CD4-positive, alpha-beta memory T cell (primary cell): ENCODE measurements at regions of chr11 and their contacts with region 1.

Region 1: GRCh38 chr11:57456960-57457642 is 3.2 kb upstream of the RTN4RL2 start:
- DNase-seq: peak; percentile 59 to 72 (median 62)
- H3K4me3 ChIP-seq: peak overlapping the region in 1 of 2 donors; percentile 3
- H3K4me3 Mint-ChIP-seq: peak overlapping the region; percentile 60 to 93 (median 70)
- H3K27ac ChIP-seq: no peak overlapping the region
- H3K27ac Mint-ChIP-seq: peak overlapping the region in 5 of 7 donors; percentile 32 to 83 (median 73)
- H3K4me1 ChIP-seq: peaks cover 40% of the 10 kb centered on the region
- H3K4me1 Mint-ChIP-seq: peaks cover 16 to 31% (median 24%) of the 10 kb centered on the region in 4 donors
- H3K27me3 ChIP-seq: peaks cover 17% of the 10 kb centered on the region
- H3K27me3 Mint-ChIP-seq: peaks cover 20 to 28% of the 10 kb centered on the region in 2 donors

Region 2: GRCh38 chr11:57345555-57346211 is 111.4 kb before region 1 on chr11:
- CTCF ChIA-PET with region 1: interaction called, 24 read pairs
- POLR2A ChIA-PET with region 1: interaction called, 3 read pairs
- intact Hi-C with region 1: loop called (anchors 1 kb)
- DNase-seq: peak; percentile 59 to 74 (median 63)
- H3K4me3 ChIP-seq: no peak overlapping the region
- H3K4me3 Mint-ChIP-seq: no peak overlapping the region
- H3K27ac ChIP-seq: no peak overlapping the region
- H3K27ac Mint-ChIP-seq: no peak overlapping the region
- H3K4me1 ChIP-seq: peaks cover 4% of the 10 kb centered on the region
- H3K4me1 Mint-ChIP-seq: peaks cover 0 to 5% (median 3%) of the 10 kb centered on the region in 4 donors
- H3K27me3 ChIP-seq: no peaks in the 10 kb centered on the region
- H3K27me3 Mint-ChIP-seq: peaks cover 2% of the 10 kb centered on the region in 2 donors

Region 3: GRCh38 chr11:57440744-57441414 is 16.2 kb before region 1 on chr11:
- CTCF ChIA-PET with region 1: interaction called, 22 read pairs
- POLR2A ChIA-PET with region 1: interaction called, 3 read pairs
- intact Hi-C with region 1: no loop called
- DNase-seq: no peak
- H3K4me3 ChIP-seq: no peak overlapping the region
- H3K4me3 Mint-ChIP-seq: no peak overlapping the region
- H3K27ac ChIP-seq: no peak overlapping the region
- H3K27ac Mint-ChIP-seq: no peak overlapping the region
- H3K4me1 ChIP-seq: no peaks in the 10 kb centered on the region
- H3K4me1 Mint-ChIP-seq: no peaks in the 10 kb centered on the region
- H3K27me3 ChIP-seq: no peaks in the 10 kb centered on the region
- H3K27me3 Mint-ChIP-seq: peaks cover 0 to 2% of the 10 kb centered on the region in 2 donors

Region 4: GRCh38 chr11:57480409-57481137 is 23.5 kb after region 1 on chr11:
- CTCF ChIA-PET with region 1: interaction called, 169 read pairs
- POLR2A ChIA-PET with region 1: interaction called, 5 read pairs
- intact Hi-C with region 1: loop called (anchors 1 kb)
- DNase-seq: peak; percentile 40 to 58 (median 41)
- H3K4me3 ChIP-seq: no peak overlapping the region
- H3K4me3 Mint-ChIP-seq: peak overlapping the region in 1 of 8 donors; percentile 57
- H3K27ac ChIP-seq: no peak overlapping the region
- H3K27ac Mint-ChIP-seq: peak overlapping the region in 3 of 7 donors; percentile 46 to 73 (median 54)
- H3K4me1 ChIP-seq: peaks cover 17% of the 10 kb centered on the region
- H3K4me1 Mint-ChIP-seq: peaks cover 8 to 39% (median 16%) of the 10 kb centered on the region in 4 donors
- H3K27me3 ChIP-seq: peaks cover 7% of the 10 kb centered on the region
- H3K27me3 Mint-ChIP-seq: peaks cover 6 to 10% of the 10 kb centered on the region in 2 donors

Region 5: DNA sequence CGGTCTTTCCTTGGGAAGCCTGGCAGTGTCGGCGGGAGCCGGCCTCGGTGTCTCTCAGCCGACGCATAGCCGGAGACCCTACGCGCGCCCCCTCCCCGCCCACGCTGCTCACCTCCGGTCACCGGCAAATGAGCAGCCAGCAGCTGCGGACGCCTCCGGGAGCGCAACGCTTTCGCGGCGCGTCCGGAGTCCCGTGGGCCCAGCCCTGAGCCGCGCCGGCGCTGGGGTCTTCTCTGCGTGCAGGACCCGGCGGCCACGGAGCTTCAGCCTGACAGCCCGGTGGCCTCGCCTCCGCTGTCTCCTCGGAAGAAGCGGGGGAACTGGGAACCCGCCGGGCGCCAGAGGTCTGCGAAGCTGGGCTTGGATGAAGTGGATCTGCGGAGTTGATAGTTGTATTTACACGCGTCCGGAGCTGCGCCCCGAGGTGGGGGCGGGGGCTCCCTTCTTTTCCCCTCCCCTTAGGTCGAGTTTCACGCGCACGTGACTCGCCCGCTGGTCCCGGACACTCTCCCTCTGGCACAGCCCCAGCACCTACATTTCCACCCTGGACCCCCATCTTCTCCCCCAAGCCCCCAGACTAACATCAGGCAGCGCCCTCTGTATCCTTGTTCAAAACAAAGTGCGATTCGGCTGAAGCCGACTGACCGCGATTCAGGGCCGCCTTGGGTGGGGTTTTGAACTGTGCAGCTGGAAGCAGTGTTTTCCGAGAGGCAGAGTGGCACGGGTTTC is 58.4 kb after region 1 on chr11 and contains the start of gene SLC43A1:
- CTCF ChIA-PET with region 1: interaction called, 46 read pairs
- POLR2A ChIA-PET with region 1: no interaction called
- intact Hi-C with region 1: no loop called
- DNase-seq: peak in 2 of 5 donors; percentile 10 to 13
- H3K4me3 ChIP-seq: peak within 1 kb of the TSS; percentile 69 to 84
- H3K4me3 Mint-ChIP-seq: peak within 1 kb of the TSS; percentile 97 to 99 (median 98)
- H3K27ac ChIP-seq: peak within 1 kb of the TSS; percentile 43
- H3K27ac Mint-ChIP-seq: peak within 1 kb of the TSS; percentile 78 to 95 (median 89)
- H3K4me1 ChIP-seq: peaks cover 22% of the 10 kb centered on the region
- H3K4me1 Mint-ChIP-seq: peaks cover 17 to 32% (median 26%) of the 10 kb centered on the region in 4 donors
- H3K27me3 ChIP-seq: no peaks in the 10 kb centered on the region
- H3K27me3 Mint-ChIP-seq: no peaks in the 10 kb centered on the region
- total RNA-seq, gene SLC43A1: 18.1 to 21.7 TPM

Region 6: DNA sequence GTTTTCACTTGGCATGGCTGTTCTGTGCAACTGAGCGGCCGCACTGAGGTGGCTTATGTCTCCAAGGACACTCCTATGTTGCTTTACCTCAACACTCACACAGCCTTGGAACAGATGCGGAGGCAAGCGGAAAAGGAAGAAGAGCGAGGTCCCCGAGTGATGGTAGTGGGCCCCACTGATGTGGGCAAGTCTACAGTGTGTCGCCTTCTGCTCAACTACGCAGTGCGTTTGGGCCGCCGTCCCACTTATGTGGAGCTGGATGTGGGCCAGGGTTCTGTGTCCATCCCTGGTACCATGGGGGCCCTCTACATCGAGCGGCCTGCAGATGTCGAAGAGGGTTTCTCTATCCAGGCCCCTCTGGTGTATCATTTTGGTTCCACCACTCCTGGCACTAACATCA is 202.6 kb after region 1 on chr11:
- CTCF ChIA-PET with region 1: no interaction called
- POLR2A ChIA-PET with region 1: no interaction called
- intact Hi-C with region 1: no loop called
- DNase-seq: no peak
- H3K4me3 ChIP-seq: no peak overlapping the region
- H3K4me3 Mint-ChIP-seq: peak overlapping the region in 1 of 8 donors; percentile 21
- H3K27ac ChIP-seq: no peak overlapping the region
- H3K27ac Mint-ChIP-seq: no peak overlapping the region
- H3K4me1 ChIP-seq: peaks cover 16% of the 10 kb centered on the region
- H3K4me1 Mint-ChIP-seq: peaks cover 17 to 30% (median 27%) of the 10 kb centered on the region in 4 donors
- H3K27me3 ChIP-seq: no peaks in the 10 kb centered on the region
- H3K27me3 Mint-ChIP-seq: no peaks in the 10 kb centered on the region

Region 7: DNA sequence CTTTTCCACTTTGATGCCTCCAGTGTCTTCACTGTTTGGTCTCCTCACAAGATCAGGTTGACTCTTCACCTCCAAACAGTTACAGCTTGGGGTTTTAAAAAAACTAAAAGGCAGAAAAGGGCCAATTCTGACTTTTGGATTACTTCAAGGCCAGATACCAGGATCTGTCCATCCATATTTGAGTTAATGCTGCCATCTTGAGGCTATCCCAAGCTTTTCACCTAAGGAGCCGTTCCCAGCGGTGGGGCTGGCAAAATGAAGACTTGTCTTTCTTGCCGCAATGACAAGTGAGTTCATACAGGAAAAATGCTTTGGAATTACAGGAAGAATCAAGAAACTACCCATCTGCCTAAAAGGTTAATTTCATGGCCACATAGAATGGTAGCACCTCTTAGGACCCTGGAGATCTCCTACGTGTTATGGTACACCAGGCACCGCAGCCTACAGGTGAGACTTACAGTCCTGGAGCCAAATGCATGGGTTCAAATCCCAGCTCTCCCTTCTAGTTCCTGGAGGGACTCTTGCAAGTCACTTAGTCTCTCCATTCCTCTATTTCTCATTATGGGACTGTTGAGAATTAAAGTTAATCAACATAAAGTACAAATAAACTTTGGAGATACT is 1056.8 kb after region 1 on chr11:
- CTCF ChIA-PET with region 1: no interaction called
- POLR2A ChIA-PET with region 1: no interaction called
- intact Hi-C with region 1: loop called (anchors 5 kb)
- DNase-seq: no peak
- H3K4me3 ChIP-seq: no peak overlapping the region
- H3K4me3 Mint-ChIP-seq: no peak overlapping the region
- H3K27ac ChIP-seq: no peak overlapping the region
- H3K27ac Mint-ChIP-seq: no peak overlapping the region
- H3K4me1 ChIP-seq: no peaks in the 10 kb centered on the region
- H3K4me1 Mint-ChIP-seq: peaks cover 0 to 4% (median 0%) of the 10 kb centered on the region in 4 donors
- H3K27me3 ChIP-seq: no peaks in the 10 kb centered on the region
- H3K27me3 Mint-ChIP-seq: no peaks in the 10 kb centered on the region